ENCODE measurements at regions of chr17 and their contacts with region 1.

Region 1: GRCh38 chr17:8222630-8223356 is 12.4 kb upstream of the AURKB start:
- DNase-seq: peak; percentile 91
- H3K4me3 Mint-ChIP-seq: peak overlapping the region; percentile 95
- H3K27ac Mint-ChIP-seq: peak overlapping the region; percentile 99
- H3K4me1 Mint-ChIP-seq: peaks cover 72% of the 10 kb centered on the region
- H3K27me3 Mint-ChIP-seq: no peaks in the 10 kb centered on the region

Region 2: DNA sequence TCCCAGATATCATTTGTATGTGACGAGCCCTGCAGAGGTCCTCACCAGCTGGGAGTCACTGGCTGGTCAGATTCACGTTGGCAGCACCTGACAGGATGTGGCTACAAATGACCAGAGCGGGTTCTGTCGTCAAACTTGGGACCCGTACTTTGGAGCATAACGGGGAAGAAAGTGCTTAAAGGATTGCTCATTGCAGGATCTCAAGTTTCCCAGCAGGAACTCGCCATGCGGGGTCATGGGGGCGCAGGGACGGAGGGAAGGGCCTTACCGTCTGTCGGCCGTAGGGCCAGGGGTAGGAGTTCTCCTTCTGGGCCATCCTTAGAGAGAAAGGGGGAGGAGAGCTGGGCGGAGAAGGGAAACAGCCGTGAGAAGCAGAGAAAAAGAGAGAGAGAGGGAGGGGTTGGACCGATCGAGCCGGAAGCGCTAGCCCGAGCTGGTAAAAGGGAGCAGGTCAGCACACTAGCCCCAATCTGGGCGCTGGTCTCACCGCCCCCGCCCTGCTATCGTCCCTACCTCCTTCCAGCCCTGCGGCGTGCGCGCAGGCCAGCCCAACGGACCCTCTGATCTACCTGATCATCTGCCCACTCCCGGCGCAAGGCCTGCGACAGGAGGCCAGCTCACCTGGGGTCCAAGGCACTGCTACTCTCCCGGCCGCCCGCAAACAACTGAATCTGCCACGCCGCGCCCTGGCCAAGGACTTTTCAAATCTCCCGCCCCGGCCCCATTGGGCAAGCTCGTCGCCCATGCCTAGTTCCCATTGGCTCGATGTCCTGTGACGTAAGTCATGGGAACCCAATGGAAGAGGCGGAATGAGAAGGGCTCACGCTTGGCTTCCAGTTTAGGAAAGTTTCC is 12.7 kb before region 1 on chr17 and contains the start of gene AURKB:
- CTCF ChIA-PET with region 1: interaction called, 12 read pairs
- POLR2A ChIA-PET with region 1: interaction called, 11 read pairs
- DNase-seq: peak; percentile 97
- H3K4me3 Mint-ChIP-seq: peak within 1 kb of the TSS; percentile 89
- H3K27ac Mint-ChIP-seq: peak within 1 kb of the TSS; percentile 99
- H3K4me1 Mint-ChIP-seq: peaks cover 45% of the 10 kb centered on the region
- H3K27me3 Mint-ChIP-seq: no peaks in the 10 kb centered on the region
- total RNA-seq, gene AURKB: 188 to 224 TPM

Region 3: DNA sequence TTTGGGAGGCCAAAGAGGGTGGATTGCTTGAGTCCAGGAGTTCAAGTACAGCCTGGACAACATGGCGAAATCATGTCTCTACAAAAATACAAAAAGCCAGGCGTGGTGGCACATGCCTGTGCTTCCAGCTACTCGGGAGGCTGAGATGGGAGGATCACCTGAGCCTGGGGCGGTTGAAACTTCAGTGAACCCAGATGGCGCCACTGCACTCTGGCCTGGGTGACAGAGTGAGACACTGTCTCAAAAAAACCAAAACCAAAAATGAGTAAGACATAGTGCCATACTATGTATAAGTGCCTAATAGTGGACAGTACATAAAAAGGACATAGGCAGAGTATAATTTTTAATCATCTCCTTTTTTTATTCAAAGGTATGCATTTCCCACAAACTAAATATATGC is 21.0 kb after region 1 on chr17:
- CTCF ChIA-PET with region 1: interaction called, 14 read pairs
- POLR2A ChIA-PET with region 1: interaction called, 7 read pairs
- DNase-seq: peak; percentile 50
- H3K4me3 Mint-ChIP-seq: peak overlapping the region; percentile 54
- H3K27ac Mint-ChIP-seq: peak overlapping the region; percentile 100
- H3K4me1 Mint-ChIP-seq: peaks cover 44% of the 10 kb centered on the region
- H3K27me3 Mint-ChIP-seq: no peaks in the 10 kb centered on the region

Measured in activated CD4-positive, alpha-beta T cell treated with anti-CD3 and anti-CD28 coated beads, Interleukin-2, amount 10 ng/mL, durations not matched to agents 7 days and 5 days (primary cell).